Posterior vena cava (tissue), 2 donors: ENCODE measurements at regions of chr12 and their contacts with region 1.

Region 1: DNA sequence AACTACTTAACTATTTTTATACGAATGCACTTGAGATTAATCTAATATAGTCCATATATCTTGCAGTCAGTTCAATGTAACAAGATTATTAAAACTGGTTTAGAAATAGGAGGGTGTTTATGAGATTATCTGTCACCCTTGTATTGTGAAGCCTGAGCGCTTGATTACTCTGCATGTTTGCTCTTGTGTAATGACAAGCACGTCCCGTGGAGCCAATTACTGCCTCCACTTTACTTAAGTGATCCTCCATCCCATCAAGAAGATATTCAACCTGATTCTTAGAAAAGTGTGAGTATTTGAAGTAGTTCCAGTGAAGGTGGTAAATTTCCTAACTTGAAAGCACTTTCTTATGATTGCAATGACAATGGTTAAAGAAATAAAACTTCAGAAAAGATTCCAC is 415.2 kb upstream of the GARIN6 start:
- DNase-seq: no peak

Region 2: DNA sequence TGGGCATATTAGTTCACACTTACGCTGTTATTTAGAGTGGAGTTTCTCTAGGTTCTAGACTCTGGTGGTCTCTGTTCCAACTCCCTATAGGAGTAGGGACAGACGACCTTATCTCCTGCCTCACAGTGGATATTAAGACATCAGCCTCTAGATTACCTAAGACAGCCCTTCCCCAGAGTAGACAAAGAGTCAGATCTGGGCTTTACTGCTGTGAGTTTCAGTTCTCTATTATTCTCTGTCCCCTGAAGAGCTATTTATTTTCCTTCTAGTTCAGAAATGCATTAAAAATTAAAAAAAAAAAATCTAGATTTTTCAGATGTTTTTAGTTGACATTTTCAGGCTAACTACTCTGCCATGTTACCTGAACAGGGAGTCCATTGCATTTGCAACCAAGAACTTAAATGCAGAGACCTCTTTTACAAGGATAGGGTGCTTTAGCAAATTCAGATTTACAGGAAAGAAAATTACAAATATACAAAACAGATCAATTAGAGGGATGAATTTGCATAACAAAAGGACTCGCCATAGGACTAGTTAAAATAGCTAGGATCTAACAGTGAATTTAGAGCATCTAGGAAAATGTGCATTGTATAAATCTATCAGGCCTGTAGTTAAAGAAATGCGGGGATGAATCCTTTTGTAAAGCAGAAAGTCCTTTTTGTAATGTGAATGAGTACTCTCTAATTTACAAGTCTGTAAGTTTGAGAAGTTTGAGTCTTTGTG is 205.8 kb before region 1 on chr12:
- intact Hi-C with region 1: no loop called
- DNase-seq: no peak

Region 3: DNA sequence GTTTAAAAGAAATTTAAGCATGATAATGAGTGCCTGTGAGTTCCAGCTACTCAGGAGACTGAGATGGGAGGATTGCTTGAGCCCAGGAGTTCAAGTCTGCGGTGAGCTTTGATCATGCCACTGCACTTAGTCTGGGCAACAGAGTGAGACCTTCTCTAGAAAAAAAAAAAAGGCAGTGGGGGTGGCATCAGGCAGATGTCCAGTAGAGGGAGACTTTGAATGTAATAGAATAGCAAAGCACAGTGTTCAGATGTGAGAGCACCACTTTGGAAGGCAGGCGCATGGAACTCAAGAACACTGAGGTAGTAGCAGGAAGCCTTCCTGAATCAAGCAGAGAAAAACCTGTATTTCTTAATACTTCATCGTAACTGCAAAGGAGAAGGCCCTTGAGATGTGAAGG is 20.7 kb after region 1 on chr12:
- intact Hi-C with region 1: loop called in 1 of 2 experiments (anchors 1 kb)
- DNase-seq: no peak